ENCODE measurements at regions of chr17 and their contacts with region 1.

Region 1: GRCh38 chr17:7583253-7584109 is at the start of gene MPDU1:
- DNase-seq: peak; percentile 98
- ATAC-seq: peak; percentile 92
- total RNA-seq, gene MPDU1: 25.9 TPM

Region 2: GRCh38 chr17:7444682-7445618 is 138.5 kb before region 1 on chr17 and contains the start of gene CHRNB1:
- intact Hi-C with region 1: loop called (anchors 5 kb)
- DNase-seq: peak; percentile 89
- ATAC-seq: peak; percentile 87
- total RNA-seq, gene CHRNB1: 9.8 TPM

Measured in Right ventricle myocardium superior (tissue), 1 donor.